A673 (cell line): ENCODE measurements at regions of chrX and their contacts with region 1.

Region 1: GRCh38 chrX:104565791-104566680 is at the start of gene IL1RAPL2:
- DNase-seq: peak; percentile 14
- H3K4me3 ChIP-seq: no peak within 1 kb of the TSS
- H3K27ac ChIP-seq: no peak within 1 kb of the TSS
- H3K4me1 ChIP-seq: no peaks in the 10 kb centered on the region
- H3K27me3 ChIP-seq: peaks cover 58% of the 10 kb centered on the region
- CTCF ChIP-seq: peak; percentile 61
- total RNA-seq, gene IL1RAPL2: not detected in 2 replicates

Region 2: GRCh38 chrX:104922206-104922621 is 356.2 kb after region 1 on chrX:
- CTCF ChIA-PET with region 1: no interaction called
- POLR2A ChIA-PET with region 1: no interaction called
- intact Hi-C with region 1: loop called (anchors 5 kb)
- DNase-seq: peak; percentile 81
- H3K4me3 ChIP-seq: no peak overlapping the region
- H3K27ac ChIP-seq: no peak overlapping the region
- H3K4me1 ChIP-seq: no peaks in the 10 kb centered on the region
- H3K27me3 ChIP-seq: no peaks in the 10 kb centered on the region
- CTCF ChIP-seq: peak; percentile 100